ENCODE measurements at regions of chr14 and their contacts with region 1.

Region 1: GRCh38 chr14:36553656-36554260 is 28.7 kb downstream of the NKX2-8 start:
- H3K4me3 ChIP-seq: no peak overlapping the region
- H3K27ac ChIP-seq: no peak overlapping the region
- H3K4me1 ChIP-seq: no peaks in the 10 kb centered on the region
- CTCF ChIP-seq: peak; percentile 44; the same call in 1 of the 2 replicates

Region 2: GRCh38 chr14:36356862-36357261 is 196.9 kb before region 1 on chr14:
- CTCF ChIA-PET with region 1: no interaction called
- POLR2A ChIA-PET with region 1: no interaction called
- H3K4me3 ChIP-seq: no peak overlapping the region
- H3K27ac ChIP-seq: no peak overlapping the region
- H3K4me1 ChIP-seq: no peaks in the 10 kb centered on the region
- CTCF ChIP-seq: no peak

Region 3: DNA sequence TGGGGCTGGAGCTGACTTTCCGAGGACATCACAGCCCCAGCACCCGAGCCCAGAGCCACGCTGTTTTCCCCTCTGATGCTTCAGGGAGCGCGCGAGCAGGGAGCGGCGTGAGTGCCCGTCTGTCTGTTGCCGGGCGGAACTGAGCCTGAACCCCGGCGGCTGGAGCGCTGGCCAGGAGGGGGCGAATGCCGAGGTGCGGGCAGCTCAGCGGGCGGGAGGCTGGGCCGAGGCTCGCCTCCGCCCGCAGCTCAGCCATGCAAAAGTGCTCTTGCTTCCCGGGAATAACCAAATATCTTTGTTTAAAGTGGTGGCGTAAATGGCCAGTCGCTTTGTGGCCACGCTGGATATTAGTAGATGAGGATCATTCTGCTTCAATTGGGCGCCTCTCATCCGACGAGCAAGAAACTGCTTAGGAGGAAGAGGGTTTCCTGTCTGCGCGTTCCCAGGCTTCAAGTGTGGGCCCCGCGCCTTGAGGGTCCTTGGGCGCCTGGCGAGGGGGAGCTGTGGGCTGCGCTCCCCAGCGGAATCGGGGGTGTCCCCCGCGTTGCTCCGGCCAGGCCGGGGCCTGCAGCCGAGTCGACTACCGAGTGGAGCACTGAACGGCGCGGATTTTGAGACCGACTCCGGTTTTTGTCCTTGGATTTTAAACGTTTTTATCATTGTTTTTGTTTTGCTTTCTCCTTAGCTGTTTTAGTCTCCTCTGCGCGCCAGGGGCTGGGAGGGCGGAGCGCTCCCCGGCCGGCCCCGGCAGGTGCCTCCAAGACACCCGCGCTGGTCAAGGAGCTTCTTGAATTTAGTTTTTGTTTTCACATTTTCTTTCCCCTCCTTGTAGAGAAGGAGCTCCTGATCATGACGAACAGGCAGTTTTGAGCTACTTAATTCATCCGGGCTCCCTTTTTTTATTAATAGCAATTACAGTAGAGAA is 32.9 kb before region 1 on chr14:
- CTCF ChIA-PET with region 1: interaction called, 42 read pairs
- POLR2A ChIA-PET with region 1: no interaction called
- H3K4me3 ChIP-seq: peak overlapping the region; percentile 59
- H3K27ac ChIP-seq: peak overlapping the region; percentile 61; the same call in 1 of the 2 replicates
- H3K4me1 ChIP-seq: no peaks in the 10 kb centered on the region
- CTCF ChIP-seq: peak; percentile 72

Region 4: DNA sequence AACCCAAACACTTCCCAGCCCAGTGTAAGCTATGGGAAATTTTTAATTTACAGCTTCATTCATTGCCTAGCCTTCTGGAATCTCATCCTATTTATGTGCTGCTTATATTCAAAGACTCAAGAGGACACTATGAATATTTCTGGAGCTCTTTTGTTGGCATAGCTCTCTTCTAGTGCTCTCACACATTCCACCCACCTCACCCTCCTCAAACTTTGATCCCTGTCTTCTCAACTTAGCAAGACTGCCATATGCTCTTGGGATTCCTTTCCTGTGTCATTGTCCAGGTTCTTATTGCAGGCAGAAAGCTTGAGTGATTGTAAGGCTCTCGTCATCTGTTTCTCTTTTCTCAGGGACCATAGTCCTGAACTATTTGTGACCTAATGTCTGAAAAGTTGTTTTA is 15.7 kb before region 1 on chr14:
- CTCF ChIA-PET with region 1: interaction called, 26 read pairs
- POLR2A ChIA-PET with region 1: no interaction called
- H3K4me3 ChIP-seq: no peak overlapping the region
- H3K27ac ChIP-seq: no peak overlapping the region
- H3K4me1 ChIP-seq: no peaks in the 10 kb centered on the region
- CTCF ChIP-seq: no peak

Region 5: DNA sequence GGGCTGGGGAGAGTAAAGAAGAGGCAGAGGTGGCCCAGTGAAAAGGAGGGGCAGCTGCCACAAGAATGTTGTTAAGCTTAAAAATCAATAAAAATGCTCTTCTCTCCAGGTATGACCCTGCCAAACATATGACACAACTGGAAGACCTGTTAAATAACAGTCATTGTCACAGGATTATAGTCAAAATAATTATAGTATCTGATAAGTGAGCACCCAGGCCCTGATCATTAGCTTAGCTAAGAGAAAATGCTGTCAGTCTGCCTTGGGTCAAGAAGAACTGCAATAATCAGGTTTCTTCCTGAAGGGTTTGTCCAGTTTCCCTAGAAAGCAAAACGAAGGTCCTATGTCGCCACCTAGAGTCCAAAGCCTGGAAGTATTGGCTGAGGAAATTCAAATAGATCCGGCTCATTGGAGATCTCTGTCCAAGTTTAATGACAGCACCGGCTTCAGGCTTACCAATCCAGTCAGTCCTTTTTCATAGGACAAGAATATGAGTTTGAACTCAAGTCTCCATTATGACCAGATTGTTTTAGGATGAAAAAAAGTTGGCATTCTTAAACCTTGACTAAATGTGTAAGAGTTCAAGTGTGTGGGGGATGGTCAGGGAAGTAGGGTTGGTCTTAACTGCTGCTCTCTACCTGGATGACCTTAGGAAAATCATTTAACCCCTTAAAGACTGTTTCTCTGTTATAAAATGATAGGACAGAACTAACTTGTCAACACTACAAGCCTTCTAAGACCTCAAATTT is 51.2 kb after region 1 on chr14:
- CTCF ChIA-PET with region 1: interaction called, 81 read pairs
- POLR2A ChIA-PET with region 1: no interaction called
- H3K4me3 ChIP-seq: no peak overlapping the region
- H3K27ac ChIP-seq: no peak overlapping the region
- H3K4me1 ChIP-seq: no peaks in the 10 kb centered on the region
- CTCF ChIP-seq: peak; percentile 58; the same call in 1 of the 2 replicates

Region 6: DNA sequence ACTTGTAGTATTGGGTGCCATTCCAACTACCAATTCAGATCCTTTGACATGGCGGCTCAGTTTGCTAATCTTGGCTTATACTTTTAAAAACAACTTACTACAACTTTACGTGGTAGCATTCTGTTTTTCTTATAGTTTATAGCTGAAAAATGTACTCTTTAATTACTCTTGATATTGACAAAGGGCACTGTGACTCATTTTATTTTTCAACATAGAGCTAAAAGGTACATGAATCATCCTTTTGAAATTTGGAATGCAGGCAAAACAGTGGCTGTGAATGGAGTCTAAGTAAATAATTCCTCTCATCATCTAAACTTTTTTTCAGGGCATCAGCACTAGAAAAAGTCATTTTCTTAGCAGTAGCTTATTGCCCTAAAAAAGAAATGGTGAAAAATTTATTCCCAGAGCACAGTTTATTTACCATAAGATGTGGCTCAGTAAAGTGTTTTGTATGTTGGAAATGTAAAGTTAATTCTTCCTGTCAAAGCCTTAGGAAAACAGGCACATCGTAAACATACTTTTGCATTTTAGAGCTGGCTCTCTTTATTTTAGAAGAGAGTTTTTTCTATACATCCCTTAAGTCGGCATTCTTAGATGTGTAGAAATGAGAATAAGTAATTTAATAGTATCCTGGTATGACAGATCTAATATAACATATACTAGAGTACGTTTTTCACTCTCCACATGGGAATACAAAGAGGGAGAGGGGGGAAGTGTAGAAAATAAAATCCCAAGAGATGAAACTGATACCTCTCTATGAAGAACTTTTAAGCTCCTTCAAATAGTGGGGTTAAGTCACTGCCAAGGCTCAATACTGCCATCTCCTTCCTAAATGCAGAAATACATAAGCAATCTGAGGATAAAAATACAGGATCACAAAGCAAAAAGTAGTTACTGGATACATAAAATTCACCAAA is 563.4 kb after region 1 on chr14:
- CTCF ChIA-PET with region 1: interaction called, 12 read pairs
- POLR2A ChIA-PET with region 1: no interaction called
- H3K4me3 ChIP-seq: peak overlapping the region; percentile 15; the same call in 1 of the 2 replicates
- H3K27ac ChIP-seq: peak overlapping the region; percentile 89
- H3K4me1 ChIP-seq: peaks cover 26% of the 10 kb centered on the region
- CTCF ChIP-seq: peak; percentile 72; the same call in 1 of the 2 replicates

Region 7: GRCh38 chr14:37230551-37231194 is 676.9 kb after region 1 on chr14:
- CTCF ChIA-PET with region 1: interaction called, 14 read pairs
- POLR2A ChIA-PET with region 1: no interaction called
- H3K4me3 ChIP-seq: no peak overlapping the region
- H3K27ac ChIP-seq: no peak overlapping the region
- H3K4me1 ChIP-seq: no peaks in the 10 kb centered on the region
- CTCF ChIP-seq: 0 out of 2 replicates have a peak, but pooled peaks have one; percentile 13

Measured in HEK293 (cell line).